IMR-90 (cell line): ENCODE measurements at regions of chr11 and their contacts with region 1.

Region 1: GRCh38 chr11:35391922-35392813 is 27.2 kb downstream of the SLC1A2 start:
- DNase-seq: peak; percentile 84
- ATAC-seq: peak; percentile 90
- H3K4me3 ChIP-seq: no peak overlapping the region
- H3K27ac ChIP-seq: peak overlapping the region; percentile 81; the same call in 1 of the 2 replicates
- H3K4me1 ChIP-seq: peaks cover 8% of the 10 kb centered on the region
- H3K27me3 ChIP-seq: no peaks in the 10 kb centered on the region
- CTCF ChIP-seq: peak; percentile 91
- POLR2A ChIP-seq: 0 out of 2 replicates have a peak, but pooled peaks have one; percentile 32
- RAD21 ChIP-seq: peak; percentile 98

Region 2: GRCh38 chr11:34519595-34520235 is 872.5 kb before region 1 on chr11:
- CTCF ChIA-PET with region 1: no interaction called
- POLR2A ChIA-PET with region 1: no interaction called
- dilution Hi-C with region 1: no loop called
- in situ Hi-C with region 1: no loop called
- intact Hi-C with region 1: loop called (anchors 5 kb)
- DNase-seq: no peak
- ATAC-seq: no peak
- H3K4me3 ChIP-seq: no peak overlapping the region
- H3K27ac ChIP-seq: no peak overlapping the region
- H3K4me1 ChIP-seq: no peaks in the 10 kb centered on the region
- H3K27me3 ChIP-seq: peaks cover 44% of the 10 kb centered on the region
- CTCF ChIP-seq: no peak
- POLR2A ChIP-seq: no peak
- RAD21 ChIP-seq: no peak

Region 3: DNA sequence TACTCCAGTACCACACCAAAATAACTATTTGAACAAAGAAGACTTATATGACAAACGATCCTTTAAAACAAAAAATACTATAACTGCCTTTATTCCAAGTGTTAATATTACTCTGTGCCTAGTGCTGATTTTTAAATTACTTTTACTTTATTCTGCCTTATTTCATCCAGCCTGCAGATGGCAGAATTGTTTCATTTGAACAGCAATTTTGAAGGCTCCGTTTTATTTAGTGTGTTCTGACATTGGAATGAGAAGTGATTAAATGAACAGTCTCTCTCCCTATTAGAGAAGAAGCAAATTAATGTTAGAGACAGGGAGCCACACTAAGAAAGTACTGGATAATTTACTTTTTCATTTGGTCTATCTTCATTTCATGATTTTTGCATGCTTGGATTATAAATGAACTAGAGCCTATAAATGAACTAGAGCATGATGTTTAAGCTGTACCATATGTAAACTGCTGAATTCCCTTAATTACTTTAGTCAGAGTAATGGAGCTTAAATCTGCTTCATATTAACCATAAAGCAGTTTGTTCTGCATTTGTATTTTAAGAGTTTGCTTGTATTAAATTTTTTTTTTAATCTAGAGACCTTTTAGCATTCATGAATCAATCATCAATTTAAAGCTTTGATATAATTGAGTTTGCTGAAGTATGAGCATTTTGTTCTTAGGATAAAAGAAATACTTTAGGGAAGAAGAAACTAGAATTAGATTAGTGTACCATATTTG is 465.9 kb before region 1 on chr11:
- CTCF ChIA-PET with region 1: interaction called, 6 read pairs
- POLR2A ChIA-PET with region 1: interaction called, 12 read pairs
- dilution Hi-C with region 1: no loop called
- in situ Hi-C with region 1: loop called (anchors 5 kb)
- intact Hi-C with region 1: loop called (anchors 1 kb)
- DNase-seq: peak; percentile 62
- ATAC-seq: peak; percentile 66
- H3K4me3 ChIP-seq: no peak overlapping the region
- H3K27ac ChIP-seq: peak overlapping the region; percentile 50
- H3K4me1 ChIP-seq: peaks cover 14% of the 10 kb centered on the region
- H3K27me3 ChIP-seq: no peaks in the 10 kb centered on the region
- CTCF ChIP-seq: peak; percentile 83
- POLR2A ChIP-seq: no peak
- RAD21 ChIP-seq: peak; percentile 89

Region 4: GRCh38 chr11:35144136-35144741 is 247.9 kb before region 1 on chr11:
- CTCF ChIA-PET with region 1: no interaction called
- POLR2A ChIA-PET with region 1: no interaction called
- dilution Hi-C with region 1: no loop called
- in situ Hi-C with region 1: no loop called
- intact Hi-C with region 1: loop called (anchors 2 kb)
- DNase-seq: peak; percentile 84
- ATAC-seq: peak; percentile 10; the same call in 1 of the 2 replicates
- H3K4me3 ChIP-seq: peak overlapping the region; percentile 9; the same call in 1 of the 2 replicates
- H3K27ac ChIP-seq: peak overlapping the region; percentile 86
- H3K4me1 ChIP-seq: peaks cover 33% of the 10 kb centered on the region
- H3K27me3 ChIP-seq: no peaks in the 10 kb centered on the region
- CTCF ChIP-seq: no peak
- POLR2A ChIP-seq: no peak
- RAD21 ChIP-seq: no peak

Region 5: DNA sequence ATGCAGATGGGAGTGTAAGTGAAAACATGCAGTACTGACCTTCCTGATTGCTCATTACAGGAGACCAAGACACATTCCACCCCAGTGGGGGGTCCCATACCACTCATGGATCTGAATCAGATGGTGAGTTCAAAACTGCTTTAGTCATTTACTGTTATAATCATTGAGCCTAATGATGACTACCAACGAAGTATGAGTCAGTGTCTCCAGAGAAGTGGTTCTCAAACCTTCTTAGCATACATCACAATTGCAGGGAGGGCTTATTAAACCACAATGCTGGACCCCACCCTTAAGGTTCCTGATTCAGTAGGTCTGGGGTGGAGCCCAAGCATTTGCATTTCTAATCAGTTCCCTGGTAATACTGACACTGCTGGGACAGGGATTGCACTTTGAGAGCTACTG is 177.4 kb before region 1 on chr11:
- CTCF ChIA-PET with region 1: no interaction called
- POLR2A ChIA-PET with region 1: no interaction called
- dilution Hi-C with region 1: no loop called
- in situ Hi-C with region 1: no loop called
- intact Hi-C with region 1: loop called (anchors 2 kb)
- DNase-seq: peak; percentile 97
- ATAC-seq: peak; percentile 47
- H3K4me3 ChIP-seq: no peak overlapping the region
- H3K27ac ChIP-seq: peak overlapping the region; percentile 61
- H3K4me1 ChIP-seq: peaks cover 39% of the 10 kb centered on the region
- H3K27me3 ChIP-seq: no peaks in the 10 kb centered on the region
- CTCF ChIP-seq: no peak
- POLR2A ChIP-seq: no peak
- RAD21 ChIP-seq: peak; percentile 17

Region 6: GRCh38 chr11:35237860-35238715 is 154.1 kb before region 1 on chr11:
- CTCF ChIA-PET with region 1: no interaction called
- POLR2A ChIA-PET with region 1: no interaction called
- dilution Hi-C with region 1: no loop called
- in situ Hi-C with region 1: loop called (anchors 10 kb)
- intact Hi-C with region 1: loop called (anchors 2 kb)
- DNase-seq: no peak
- ATAC-seq: no peak
- H3K4me3 ChIP-seq: no peak overlapping the region
- H3K27ac ChIP-seq: peak overlapping the region; percentile 17; the same call in 1 of the 2 replicates
- H3K4me1 ChIP-seq: peaks cover 7% of the 10 kb centered on the region
- H3K27me3 ChIP-seq: no peaks in the 10 kb centered on the region
- CTCF ChIP-seq: peak; percentile 39
- POLR2A ChIP-seq: no peak
- RAD21 ChIP-seq: peak; percentile 42